ENCODE measurements at regions of chr1 and their contacts with region 1.

Region 1: DNA sequence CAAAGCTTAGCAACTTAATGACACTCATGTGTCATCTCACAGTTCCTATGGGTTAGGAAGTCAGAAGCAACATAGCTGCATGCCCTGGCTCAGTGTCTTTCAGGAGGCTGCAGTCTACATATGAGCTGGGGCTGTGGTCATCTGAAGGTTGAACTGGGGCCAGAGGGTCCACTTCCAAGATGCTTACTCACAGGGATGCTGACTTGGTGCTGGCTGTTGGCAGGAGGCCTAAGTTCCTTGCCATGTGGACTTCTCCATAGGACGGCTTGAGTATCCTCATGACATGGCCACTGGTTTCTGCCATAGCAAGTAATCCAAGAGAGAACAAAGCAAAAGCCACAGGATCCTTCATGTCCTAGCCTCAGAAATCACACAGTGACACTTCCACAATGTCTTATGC is 12.1 kb upstream of the FAM43B start:
- DNase-seq: no peak
- ATAC-seq: no peak
- H3K4me3 ChIP-seq: no peak overlapping the region
- H3K27ac ChIP-seq: no peak overlapping the region
- H3K4me1 ChIP-seq: no peaks in the 10 kb centered on the region
- H3K27me3 ChIP-seq: peaks cover 3% of the 10 kb centered on the region; the same call in 1 of the 2 replicates
- CTCF ChIP-seq: no peak

Region 2: DNA sequence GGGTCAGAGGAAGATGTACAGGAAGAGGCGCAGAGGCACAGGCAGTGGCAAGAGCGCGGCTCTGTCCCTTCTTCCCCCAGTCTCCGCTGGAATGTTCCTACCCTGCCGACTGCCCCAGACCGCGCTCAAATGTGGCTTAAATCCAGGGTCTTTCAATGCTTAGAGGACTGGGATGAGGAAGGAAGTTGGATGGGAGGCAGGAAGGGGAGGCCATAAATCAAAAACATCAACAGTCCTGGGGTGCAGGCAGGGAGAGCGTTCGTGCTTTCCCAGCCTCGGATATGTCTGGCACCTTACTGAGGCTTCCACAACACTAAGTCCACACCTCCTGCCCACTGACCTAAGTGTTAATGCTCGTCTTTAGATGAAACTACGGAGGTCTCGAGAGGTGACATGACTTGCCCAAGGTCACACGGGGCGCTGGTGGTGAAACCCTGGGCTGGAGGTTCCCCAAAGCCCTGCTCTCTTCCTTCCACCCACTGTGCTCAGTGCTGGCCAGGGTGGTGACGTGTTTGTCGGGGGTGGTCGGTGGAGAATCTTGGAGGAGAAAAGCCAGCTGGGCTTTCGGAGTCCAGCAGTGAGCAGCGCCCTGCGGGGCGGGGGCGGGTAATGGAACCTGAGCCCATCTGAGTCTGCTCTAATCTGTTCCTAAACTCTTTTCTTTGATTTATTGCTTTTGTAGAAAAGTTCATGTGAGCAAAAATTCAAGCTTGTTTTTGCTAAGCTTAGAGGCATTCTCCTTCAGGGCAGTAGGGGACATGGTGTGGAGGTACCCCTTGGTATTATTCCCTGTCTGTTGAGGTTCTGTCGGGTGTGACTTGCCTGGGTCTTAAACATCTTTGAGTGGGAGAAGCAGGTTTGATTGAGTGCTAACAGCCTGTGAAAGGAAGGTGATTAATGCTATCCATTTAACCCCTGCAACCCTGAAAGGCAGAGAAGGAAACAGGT is 49.3 kb after region 1 on chr1:
- CTCF ChIA-PET with region 1: interaction called, 11 read pairs
- POLR2A ChIA-PET with region 1: no interaction called
- in situ Hi-C with region 1: no loop called
- intact Hi-C with region 1: no loop called
- DNase-seq: no peak
- ATAC-seq: peak; percentile 50; the same call in 1 of the 2 replicates
- H3K4me3 ChIP-seq: 0 out of 4 replicates have a peak overlapping the region, but pooled peaks of 1 of the 2 experiments have one; percentile 4
- H3K27ac ChIP-seq: no peak overlapping the region
- H3K4me1 ChIP-seq: peaks cover 3% of the 10 kb centered on the region; the same call in 1 of the 2 replicates
- H3K27me3 ChIP-seq: no peaks in the 10 kb centered on the region
- CTCF ChIP-seq: no peak

Region 3: GRCh38 chr1:20601129-20601825 is 61.0 kb after region 1 on chr1:
- CTCF ChIA-PET with region 1: no interaction called
- POLR2A ChIA-PET with region 1: no interaction called
- in situ Hi-C with region 1: no loop called
- intact Hi-C with region 1: no loop called
- DNase-seq: no peak
- ATAC-seq: peak; percentile 71
- H3K4me3 ChIP-seq: no peak overlapping the region
- H3K27ac ChIP-seq: no peak overlapping the region
- H3K4me1 ChIP-seq: no peaks in the 10 kb centered on the region; the same call in 1 of the 2 replicates
- H3K27me3 ChIP-seq: no peaks in the 10 kb centered on the region
- CTCF ChIP-seq: no peak

Region 4: GRCh38 chr1:20903437-20903836 is 363.2 kb after region 1 on chr1:
- CTCF ChIA-PET with region 1: no interaction called
- POLR2A ChIA-PET with region 1: no interaction called
- in situ Hi-C with region 1: no loop called
- intact Hi-C with region 1: no loop called
- DNase-seq: no peak
- ATAC-seq: no peak
- H3K4me3 ChIP-seq: no peak overlapping the region
- H3K27ac ChIP-seq: no peak overlapping the region
- H3K4me1 ChIP-seq: no peaks in the 10 kb centered on the region; the same call in 1 of the 2 replicates
- H3K27me3 ChIP-seq: no peaks in the 10 kb centered on the region
- CTCF ChIP-seq: no peak

Measured in Panc1 (cell line).